ENCODE measurements at regions of chr13 and their contacts with region 1.

Region 1: DNA sequence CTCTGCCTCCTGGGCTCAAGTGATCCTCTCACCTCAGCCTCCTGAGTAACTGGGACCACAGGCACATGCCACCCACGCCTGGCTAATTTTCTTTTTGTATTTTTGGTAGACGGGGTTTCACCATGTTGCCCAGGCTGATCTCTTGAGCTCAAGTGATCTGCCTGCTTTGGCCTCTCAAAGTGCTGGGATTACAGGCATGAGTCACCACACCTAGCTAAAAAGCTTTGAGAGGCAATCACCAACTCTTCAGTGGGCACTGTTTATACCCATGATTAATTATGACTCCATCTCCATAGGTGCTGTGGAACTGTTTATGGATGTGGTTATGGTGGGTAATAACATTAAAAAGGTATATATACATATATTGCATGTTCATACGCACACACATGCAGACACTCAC is 7.5 kb upstream of the RBM26 start:
- DNase-seq: no peak
- ATAC-seq: no peak
- H3K4me3 Mint-ChIP-seq: no peak overlapping the region
- H3K27ac Mint-ChIP-seq: no peak overlapping the region
- H3K4me1 Mint-ChIP-seq: no peaks in the 10 kb centered on the region
- H3K27me3 Mint-ChIP-seq: no peaks in the 10 kb centered on the region
- CTCF ChIP-seq: no peak

Region 2: GRCh38 chr13:78709028-78709427 is 704.5 kb before region 1 on chr13:
- CTCF ChIA-PET with region 1: no interaction called
- POLR2A ChIA-PET with region 1: no interaction called
- intact Hi-C with region 1: no loop called
- DNase-seq: no peak
- ATAC-seq: no peak
- H3K4me3 Mint-ChIP-seq: no peak overlapping the region
- H3K27ac Mint-ChIP-seq: no peak overlapping the region
- H3K4me1 Mint-ChIP-seq: no peaks in the 10 kb centered on the region
- H3K27me3 Mint-ChIP-seq: peaks cover 7% of the 10 kb centered on the region
- CTCF ChIP-seq: no peak

Region 3: GRCh38 chr13:79423801-79424642 is 10.5 kb after region 1 on chr13:
- CTCF ChIA-PET with region 1: interaction called, 14 read pairs
- POLR2A ChIA-PET with region 1: no interaction called
- intact Hi-C with region 1: no loop called
- DNase-seq: no peak
- ATAC-seq: peak; percentile 52
- H3K4me3 Mint-ChIP-seq: no peak overlapping the region
- H3K27ac Mint-ChIP-seq: no peak overlapping the region
- H3K4me1 Mint-ChIP-seq: no peaks in the 10 kb centered on the region
- H3K27me3 Mint-ChIP-seq: no peaks in the 10 kb centered on the region
- CTCF ChIP-seq: no peak

Measured in activated B cell treated with CpG ODN at 0.5 μM for 24 hours (primary cell).